B cell (primary cell): ENCODE measurements at regions of chr13 and their contacts with region 1.

Region 1: GRCh38 chr13:28138012-28138755 is at the start of gene PAN3:
- DNase-seq: peak; percentile 96
- ATAC-seq: peak; percentile 65
- H3K4me3 ChIP-seq: peak within 1 kb of the TSS; percentile 80 to 97 (median 93)
- H3K4me3 Mint-ChIP-seq: peak within 1 kb of the TSS; percentile 87
- H3K27ac ChIP-seq: peak within 1 kb of the TSS; percentile 92 to 95
- H3K27ac Mint-ChIP-seq: peak within 1 kb of the TSS; percentile 99
- H3K4me1 ChIP-seq: peaks cover 37 to 43% of the 10 kb centered on the region in 2 donors
- H3K4me1 Mint-ChIP-seq: peaks cover 50% of the 10 kb centered on the region
- H3K27me3 ChIP-seq: no peaks in the 10 kb centered on the region
- H3K27me3 Mint-ChIP-seq: no peaks in the 10 kb centered on the region
- CTCF ChIP-seq: no peak
- total RNA-seq, gene PAN3: 117 and 119 TPM in 2 replicates

Region 2: GRCh38 chr13:26186118-26186870 is 1951.9 kb before region 1 on chr13:
- CTCF ChIA-PET with region 1: no interaction called
- POLR2A ChIA-PET with region 1: no interaction called
- intact Hi-C with region 1: loop called (anchors 10 kb)
- DNase-seq: peak; percentile 99
- ATAC-seq: peak; percentile 87
- H3K4me3 ChIP-seq: peak overlapping the region; percentile 66 to 91 (median 73)
- H3K4me3 Mint-ChIP-seq: peak overlapping the region; percentile 91
- H3K27ac ChIP-seq: peak overlapping the region; percentile 86 to 88
- H3K27ac Mint-ChIP-seq: peak overlapping the region; percentile 96
- H3K4me1 ChIP-seq: peaks cover 33 to 44% of the 10 kb centered on the region in 2 donors
- H3K4me1 Mint-ChIP-seq: peaks cover 46% of the 10 kb centered on the region
- H3K27me3 ChIP-seq: no peaks in the 10 kb centered on the region
- H3K27me3 Mint-ChIP-seq: no peaks in the 10 kb centered on the region
- CTCF ChIP-seq: peak; percentile 72

Region 3: DNA sequence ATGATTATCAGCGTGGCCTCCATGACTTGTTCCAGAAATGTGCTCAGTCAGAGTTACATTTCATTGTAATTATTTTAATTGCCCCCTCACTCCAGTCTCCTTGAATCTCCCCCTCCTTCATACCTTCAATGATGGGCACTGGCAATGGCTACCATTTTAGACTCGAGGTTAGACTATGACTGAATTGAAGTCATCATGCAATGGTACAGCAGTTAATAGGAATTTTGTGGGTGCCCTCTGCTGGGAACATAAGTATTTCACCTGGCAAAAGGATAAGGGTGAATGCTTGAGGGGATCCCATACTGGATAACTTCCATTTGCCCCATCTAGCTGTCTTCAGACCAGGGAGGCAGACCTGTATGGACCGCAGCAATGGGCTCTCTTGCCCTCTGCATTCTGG is 934.3 kb before region 1 on chr13:
- CTCF ChIA-PET with region 1: no interaction called
- POLR2A ChIA-PET with region 1: no interaction called
- intact Hi-C with region 1: no loop called
- DNase-seq: no peak
- ATAC-seq: no peak
- H3K4me3 ChIP-seq: no peak overlapping the region
- H3K4me3 Mint-ChIP-seq: no peak overlapping the region
- H3K27ac ChIP-seq: no peak overlapping the region
- H3K27ac Mint-ChIP-seq: no peak overlapping the region
- H3K4me1 ChIP-seq: no peaks in the 10 kb centered on the region
- H3K4me1 Mint-ChIP-seq: no peaks in the 10 kb centered on the region
- H3K27me3 ChIP-seq: peaks cover 0 to 5% (median 0%) of the 10 kb centered on the region in 4 experiments
- H3K27me3 Mint-ChIP-seq: no peaks in the 10 kb centered on the region
- CTCF ChIP-seq: no peak

Region 4: DNA sequence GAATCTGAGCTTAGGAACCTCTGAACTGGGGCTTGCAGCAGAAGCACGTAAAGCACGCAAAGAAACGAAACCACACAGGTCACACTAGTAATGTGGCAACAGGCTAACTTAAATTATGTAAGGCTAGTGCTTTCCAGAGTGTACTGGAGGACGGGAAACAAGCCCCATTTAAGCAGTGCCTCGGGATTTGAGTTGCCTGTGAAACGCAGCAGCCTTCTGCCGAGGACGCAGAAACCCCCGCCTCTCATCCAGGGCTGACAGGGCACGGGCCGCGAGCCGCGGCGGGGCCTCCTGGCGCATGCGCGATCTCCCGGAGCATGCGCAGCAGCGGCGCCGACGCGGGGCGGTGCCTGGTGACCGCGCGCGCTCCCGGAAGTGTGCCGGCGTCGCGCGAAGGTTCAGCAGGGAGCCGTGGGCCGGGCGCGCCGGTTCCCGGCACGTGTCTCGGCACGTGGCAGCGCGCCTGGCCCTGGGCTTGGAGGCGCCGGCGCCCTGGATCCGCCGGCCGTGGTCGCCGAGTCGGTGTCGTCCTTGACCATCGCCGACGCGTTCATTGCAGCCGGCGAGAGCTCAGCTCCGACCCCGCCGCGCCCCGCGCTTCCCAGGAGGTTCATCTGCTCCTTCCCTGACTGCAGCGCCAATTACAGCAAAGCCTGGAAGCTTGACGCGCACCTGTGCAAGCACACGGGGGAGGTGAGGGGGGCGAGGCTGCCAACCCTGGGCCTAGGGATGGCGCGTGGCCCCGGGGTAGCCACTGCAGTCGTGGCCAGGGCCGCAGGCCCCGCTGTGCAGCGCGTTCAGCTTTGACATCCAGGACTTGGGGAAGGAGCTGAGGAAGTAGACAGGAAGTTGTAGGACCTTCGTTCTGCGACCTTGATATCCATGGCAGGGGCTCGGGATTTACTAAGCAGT is 713.7 kb before region 1 on chr13 and contains the start of gene GTF3A:
- CTCF ChIA-PET with region 1: no interaction called
- POLR2A ChIA-PET with region 1: no interaction called
- intact Hi-C with region 1: loop called (anchors 2 kb)
- DNase-seq: peak; percentile 96
- ATAC-seq: peak; percentile 66
- H3K4me3 ChIP-seq: peak within 1 kb of the TSS; percentile 74 to 97 (median 83)
- H3K4me3 Mint-ChIP-seq: peak within 1 kb of the TSS; percentile 82
- H3K27ac ChIP-seq: peak within 1 kb of the TSS; percentile 78 to 88
- H3K27ac Mint-ChIP-seq: peak within 1 kb of the TSS; percentile 88
- H3K4me1 ChIP-seq: peaks cover 25 to 36% of the 10 kb centered on the region in 2 donors
- H3K4me1 Mint-ChIP-seq: peaks cover 39% of the 10 kb centered on the region
- H3K27me3 ChIP-seq: no peaks in the 10 kb centered on the region
- H3K27me3 Mint-ChIP-seq: no peaks in the 10 kb centered on the region
- CTCF ChIP-seq: no peak
- total RNA-seq, gene GTF3A: 114 and 122 TPM in 2 replicates

Region 5: GRCh38 chr13:27919934-27920676 is 218.1 kb before region 1 on chr13 and contains the start of gene PDX1:
- CTCF ChIA-PET with region 1: no interaction called
- POLR2A ChIA-PET with region 1: no interaction called
- intact Hi-C with region 1: loop called (anchors 5 kb)
- DNase-seq: peak; percentile 55
- ATAC-seq: peak; percentile 44
- H3K4me3 ChIP-seq: peak within 1 kb of the TSS in 4 of 5 experiments; percentile 27 to 61 (median 50)
- H3K4me3 Mint-ChIP-seq: peak within 1 kb of the TSS; percentile 81
- H3K27ac ChIP-seq: no peak within 1 kb of the TSS
- H3K27ac Mint-ChIP-seq: no peak within 1 kb of the TSS
- H3K4me1 ChIP-seq: peaks cover 59 to 75% of the 10 kb centered on the region in 2 donors
- H3K4me1 Mint-ChIP-seq: peaks cover 40% of the 10 kb centered on the region
- H3K27me3 ChIP-seq: peaks cover 0 to 95% (median 76%) of the 10 kb centered on the region in 4 experiments
- H3K27me3 Mint-ChIP-seq: peaks cover 66% of the 10 kb centered on the region
- CTCF ChIP-seq: no peak
- total RNA-seq, gene PDX1: not detected in 2 replicates

Region 6: DNA sequence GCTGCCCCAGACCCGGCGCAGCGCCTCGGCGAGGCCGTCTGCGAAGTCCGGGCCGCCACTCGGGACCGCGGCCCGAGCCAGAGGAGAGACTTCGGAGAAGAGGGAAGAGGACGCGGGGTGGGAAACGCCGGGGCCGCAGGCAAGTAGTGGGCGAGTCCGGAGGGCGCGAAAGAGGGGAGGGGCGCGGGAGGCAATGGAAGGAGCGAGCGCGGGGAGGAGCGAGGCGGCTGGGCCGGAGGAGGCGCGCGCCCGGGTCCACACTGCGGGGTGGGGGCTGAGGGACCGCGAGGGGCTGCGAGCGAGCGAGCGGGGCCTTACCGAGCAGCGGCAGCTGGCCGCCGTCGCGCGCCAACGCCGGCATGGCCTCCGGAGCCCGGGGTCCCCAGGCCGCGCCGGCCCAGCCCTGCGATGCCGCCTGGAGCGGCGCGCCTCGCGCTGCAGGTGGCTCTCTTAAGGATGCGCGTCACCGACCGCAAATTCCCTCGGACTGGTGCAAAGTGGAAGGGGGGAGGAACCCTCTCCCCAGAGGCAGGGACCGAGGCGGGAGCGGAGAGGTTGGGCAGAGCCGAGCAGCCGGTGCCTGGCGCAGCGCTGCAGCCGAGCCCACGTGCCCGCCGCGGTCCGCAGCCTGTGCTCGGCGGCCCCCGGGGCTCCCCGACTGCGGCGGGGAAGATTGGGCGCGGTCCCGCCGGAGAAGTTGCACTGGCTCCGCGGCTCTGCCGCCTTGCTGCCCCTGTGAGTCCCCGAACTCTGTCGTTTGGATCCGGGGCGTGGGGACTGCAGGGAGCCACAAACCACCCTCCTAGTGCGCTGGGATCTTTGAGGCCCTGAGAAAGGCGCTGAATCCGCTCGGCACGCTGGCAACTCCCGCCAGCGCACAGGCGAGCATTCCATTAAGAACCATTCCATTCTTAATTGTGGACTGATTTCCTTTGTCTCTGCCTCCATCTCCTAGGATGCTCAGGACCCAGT is 37.7 kb before region 1 on chr13 and contains the start of gene FLT3:
- CTCF ChIA-PET with region 1: no interaction called
- POLR2A ChIA-PET with region 1: interaction called, 3 read pairs
- intact Hi-C with region 1: loop called (anchors 2 kb)
- DNase-seq: peak; percentile 75
- ATAC-seq: peak; percentile 71
- H3K4me3 ChIP-seq: peak within 1 kb of the TSS; percentile 20 to 60 (median 54)
- H3K4me3 Mint-ChIP-seq: peak within 1 kb of the TSS; percentile 83
- H3K27ac ChIP-seq: no peak within 1 kb of the TSS
- H3K27ac Mint-ChIP-seq: no peak within 1 kb of the TSS
- H3K4me1 ChIP-seq: peaks cover 13 to 16% of the 10 kb centered on the region in 2 donors
- H3K4me1 Mint-ChIP-seq: peaks cover 8% of the 10 kb centered on the region
- H3K27me3 ChIP-seq: peaks cover 0 to 40% (median 28%) of the 10 kb centered on the region in 4 experiments
- H3K27me3 Mint-ChIP-seq: peaks cover 50% of the 10 kb centered on the region
- CTCF ChIP-seq: no peak
- total RNA-seq, gene FLT3: 0.42 and 0.70 TPM in 2 replicates

Region 7: GRCh38 chr13:28229522-28230411 is 91.6 kb after region 1 on chr13:
- CTCF ChIA-PET with region 1: no interaction called
- POLR2A ChIA-PET with region 1: no interaction called
- intact Hi-C with region 1: no loop called
- DNase-seq: no peak
- ATAC-seq: no peak
- H3K4me3 ChIP-seq: no peak overlapping the region
- H3K4me3 Mint-ChIP-seq: no peak overlapping the region
- H3K27ac ChIP-seq: no peak overlapping the region
- H3K27ac Mint-ChIP-seq: peak overlapping the region; percentile 41
- H3K4me1 ChIP-seq: no peaks in the 10 kb centered on the region
- H3K4me1 Mint-ChIP-seq: peaks cover 25% of the 10 kb centered on the region
- H3K27me3 ChIP-seq: no peaks in the 10 kb centered on the region
- H3K27me3 Mint-ChIP-seq: no peaks in the 10 kb centered on the region
- CTCF ChIP-seq: no peak

Region 8: GRCh38 chr13:28258417-28258816 is 120.2 kb after region 1 on chr13:
- CTCF ChIA-PET with region 1: no interaction called
- POLR2A ChIA-PET with region 1: no interaction called
- intact Hi-C with region 1: loop called (anchors 5 kb)
- DNase-seq: no peak
- ATAC-seq: no peak
- H3K4me3 ChIP-seq: no peak overlapping the region
- H3K4me3 Mint-ChIP-seq: no peak overlapping the region
- H3K27ac ChIP-seq: peak overlapping the region in 1 of 2 donors; percentile 14
- H3K27ac Mint-ChIP-seq: peak overlapping the region; percentile 6
- H3K4me1 ChIP-seq: peaks cover 15 to 22% of the 10 kb centered on the region in 2 donors
- H3K4me1 Mint-ChIP-seq: peaks cover 32% of the 10 kb centered on the region
- H3K27me3 ChIP-seq: no peaks in the 10 kb centered on the region
- H3K27me3 Mint-ChIP-seq: no peaks in the 10 kb centered on the region
- CTCF ChIP-seq: no peak

Region 9: DNA sequence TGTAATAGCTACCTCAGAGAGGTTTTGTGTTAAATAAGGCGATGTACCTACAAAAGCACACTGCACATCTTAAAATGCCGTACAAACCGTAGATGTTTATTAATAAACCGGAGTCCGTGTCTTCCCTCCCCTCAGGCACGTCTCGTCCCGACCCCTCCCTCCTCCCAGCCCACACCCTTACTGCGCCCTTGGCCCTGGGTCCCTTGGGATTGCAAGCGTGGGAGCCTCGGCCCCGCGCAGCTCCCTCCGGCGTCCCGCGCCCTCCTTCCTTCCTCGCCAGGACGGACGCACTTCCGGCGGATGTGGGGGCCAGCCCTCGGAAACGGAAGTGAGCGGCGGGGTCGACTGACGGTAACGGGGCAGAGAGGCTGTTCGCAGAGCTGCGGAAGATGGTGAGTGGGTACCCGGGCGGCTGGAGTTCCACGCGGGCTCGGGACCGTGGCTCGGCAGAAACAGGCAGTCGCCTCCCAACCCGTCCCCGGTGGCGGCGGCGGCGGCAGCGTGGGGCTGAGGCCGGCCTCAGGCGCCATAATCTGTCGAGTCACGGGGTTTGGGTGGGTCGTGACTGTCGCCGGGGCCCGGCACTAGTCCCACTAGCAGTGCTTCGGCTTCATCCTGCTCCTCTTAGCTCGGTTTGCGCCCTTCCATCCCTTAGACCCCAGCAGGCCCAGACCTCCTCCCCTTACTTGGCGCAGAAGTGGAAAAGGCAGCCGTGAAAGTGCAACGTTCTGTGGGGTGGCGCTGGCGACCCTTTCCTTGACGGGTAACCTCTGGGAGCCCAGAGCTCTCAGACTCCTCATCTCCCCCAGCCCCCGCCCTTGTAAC is 520.8 kb after region 1 on chr13 and contains the start of gene POMP:
- CTCF ChIA-PET with region 1: no interaction called
- POLR2A ChIA-PET with region 1: interaction called, 5 read pairs
- intact Hi-C with region 1: loop called (anchors 1 kb)
- DNase-seq: peak; percentile 97
- ATAC-seq: peak; percentile 92
- H3K4me3 ChIP-seq: peak within 1 kb of the TSS; percentile 78 to 97 (median 89)
- H3K4me3 Mint-ChIP-seq: peak within 1 kb of the TSS; percentile 97
- H3K27ac ChIP-seq: peak within 1 kb of the TSS; percentile 86 to 93
- H3K27ac Mint-ChIP-seq: peak within 1 kb of the TSS; percentile 98
- H3K4me1 ChIP-seq: peaks cover 43 to 44% of the 10 kb centered on the region in 2 donors
- H3K4me1 Mint-ChIP-seq: peaks cover 61% of the 10 kb centered on the region
- H3K27me3 ChIP-seq: no peaks in the 10 kb centered on the region
- H3K27me3 Mint-ChIP-seq: no peaks in the 10 kb centered on the region
- CTCF ChIP-seq: no peak
- total RNA-seq, gene POMP: 18.9 and 28.7 TPM in 2 replicates